ENCODE measurements at regions of chr17 and their contacts with region 1.

Region 1: GRCh38 chr17:35898283-35899070 is 18.3 kb upstream of the CCL5 start:
- DNase-seq: peak; percentile 85
- ATAC-seq: peak; percentile 71
- H3K4me3 Mint-ChIP-seq: peak overlapping the region; percentile 63
- H3K27ac Mint-ChIP-seq: peak overlapping the region; percentile 83
- H3K4me1 Mint-ChIP-seq: peaks cover 69% of the 10 kb centered on the region
- H3K27me3 Mint-ChIP-seq: no peaks in the 10 kb centered on the region
- CTCF ChIP-seq: no peak

Region 2: DNA sequence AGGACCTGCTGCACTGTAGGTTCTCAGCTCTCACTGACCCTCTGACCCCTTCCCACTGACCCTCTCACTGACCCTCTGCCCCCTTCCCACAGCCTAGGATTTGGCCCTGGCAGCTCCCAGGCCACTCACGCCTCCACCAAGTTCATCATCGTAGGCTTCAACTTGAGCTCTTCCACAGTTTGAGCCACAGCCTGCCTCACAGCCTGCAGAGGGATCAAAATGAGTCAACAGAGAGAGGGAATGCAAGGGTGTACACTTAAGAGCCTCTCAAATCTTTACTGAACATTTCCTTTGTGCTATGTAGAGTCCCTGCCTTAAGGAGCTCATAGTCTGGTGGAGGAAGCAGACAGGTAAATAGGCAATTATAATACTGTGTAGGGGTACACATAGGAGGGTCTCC is 41.9 kb before region 1 on chr17:
- CTCF ChIA-PET with region 1: no interaction called
- POLR2A ChIA-PET with region 1: no interaction called
- intact Hi-C with region 1: no loop called
- DNase-seq: no peak
- ATAC-seq: no peak
- H3K4me3 Mint-ChIP-seq: no peak overlapping the region
- H3K27ac Mint-ChIP-seq: peak overlapping the region; percentile 12
- H3K4me1 Mint-ChIP-seq: peaks cover 10% of the 10 kb centered on the region
- H3K27me3 Mint-ChIP-seq: no peaks in the 10 kb centered on the region
- CTCF ChIP-seq: no peak

Region 3: DNA sequence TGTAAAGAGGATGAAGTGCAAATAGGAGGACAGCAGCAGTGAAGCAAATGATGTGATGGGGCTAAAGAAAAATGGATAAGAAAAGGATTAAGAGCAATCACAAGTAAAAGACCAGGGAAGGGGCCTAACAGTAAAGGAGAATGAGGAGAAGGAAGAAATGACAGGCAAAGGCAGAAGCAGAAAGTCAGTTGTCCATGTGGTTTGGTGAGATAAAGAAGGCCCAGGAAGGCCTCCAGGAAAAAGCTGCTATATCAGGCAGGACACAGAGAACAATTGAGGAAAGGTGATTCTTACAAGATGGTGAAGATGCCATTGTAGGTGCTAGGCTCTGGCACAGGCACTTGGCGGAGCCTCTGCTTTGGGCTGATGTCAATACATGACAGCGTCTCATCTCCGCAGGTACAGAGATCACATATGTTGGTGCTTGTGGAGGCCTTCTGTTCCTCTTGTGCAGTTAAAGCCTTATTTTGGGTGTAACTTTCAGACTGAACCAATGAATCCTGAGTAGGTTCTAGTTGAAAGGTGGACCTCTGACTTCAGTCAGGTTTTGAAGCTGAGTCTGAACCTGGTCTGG is 13.9 kb after region 1 on chr17:
- CTCF ChIA-PET with region 1: interaction called, 10 read pairs
- POLR2A ChIA-PET with region 1: interaction called, 4 read pairs
- intact Hi-C with region 1: no loop called
- DNase-seq: no peak
- ATAC-seq: no peak
- H3K4me3 Mint-ChIP-seq: no peak overlapping the region
- H3K27ac Mint-ChIP-seq: no peak overlapping the region
- H3K4me1 Mint-ChIP-seq: peaks cover 35% of the 10 kb centered on the region
- H3K27me3 Mint-ChIP-seq: no peaks in the 10 kb centered on the region
- CTCF ChIP-seq: no peak